CD4-positive, alpha-beta memory T cell (primary cell): ENCODE measurements at regions of chr3 and their contacts with region 1.

Region 1: GRCh38 chr3:194682694-194683310 is 2.9 kb upstream of the FAM43A start:
- DNase-seq: peak; percentile 59 to 74 (median 69)
- H3K4me3 ChIP-seq: no peak overlapping the region
- H3K4me3 Mint-ChIP-seq: peak overlapping the region in 1 of 8 donors; percentile 23
- H3K27ac ChIP-seq: no peak overlapping the region
- H3K27ac Mint-ChIP-seq: peak overlapping the region in 2 of 7 donors; percentile 4 to 62
- H3K4me1 ChIP-seq: peaks cover 35% of the 10 kb centered on the region
- H3K4me1 Mint-ChIP-seq: peaks cover 16 to 42% (median 29%) of the 10 kb centered on the region in 4 donors
- H3K27me3 ChIP-seq: no peaks in the 10 kb centered on the region
- H3K27me3 Mint-ChIP-seq: no peaks in the 10 kb centered on the region

Region 2: GRCh38 chr3:194583604-194584318 is 99.0 kb before region 1 on chr3:
- CTCF ChIA-PET with region 1: no interaction called
- POLR2A ChIA-PET with region 1: interaction called, 13 read pairs
- intact Hi-C with region 1: no loop called
- DNase-seq: peak; percentile 90 to 94 (median 94)
- H3K4me3 ChIP-seq: peak overlapping the region; percentile 71 to 76
- H3K4me3 Mint-ChIP-seq: peak overlapping the region; percentile 93 to 97 (median 94)
- H3K27ac ChIP-seq: peak overlapping the region; percentile 83
- H3K27ac Mint-ChIP-seq: peak overlapping the region; percentile 92 to 99 (median 97)
- H3K4me1 ChIP-seq: peaks cover 16% of the 10 kb centered on the region
- H3K4me1 Mint-ChIP-seq: peaks cover 7 to 21% (median 13%) of the 10 kb centered on the region in 4 donors
- H3K27me3 ChIP-seq: no peaks in the 10 kb centered on the region
- H3K27me3 Mint-ChIP-seq: no peaks in the 10 kb centered on the region

Region 3: DNA sequence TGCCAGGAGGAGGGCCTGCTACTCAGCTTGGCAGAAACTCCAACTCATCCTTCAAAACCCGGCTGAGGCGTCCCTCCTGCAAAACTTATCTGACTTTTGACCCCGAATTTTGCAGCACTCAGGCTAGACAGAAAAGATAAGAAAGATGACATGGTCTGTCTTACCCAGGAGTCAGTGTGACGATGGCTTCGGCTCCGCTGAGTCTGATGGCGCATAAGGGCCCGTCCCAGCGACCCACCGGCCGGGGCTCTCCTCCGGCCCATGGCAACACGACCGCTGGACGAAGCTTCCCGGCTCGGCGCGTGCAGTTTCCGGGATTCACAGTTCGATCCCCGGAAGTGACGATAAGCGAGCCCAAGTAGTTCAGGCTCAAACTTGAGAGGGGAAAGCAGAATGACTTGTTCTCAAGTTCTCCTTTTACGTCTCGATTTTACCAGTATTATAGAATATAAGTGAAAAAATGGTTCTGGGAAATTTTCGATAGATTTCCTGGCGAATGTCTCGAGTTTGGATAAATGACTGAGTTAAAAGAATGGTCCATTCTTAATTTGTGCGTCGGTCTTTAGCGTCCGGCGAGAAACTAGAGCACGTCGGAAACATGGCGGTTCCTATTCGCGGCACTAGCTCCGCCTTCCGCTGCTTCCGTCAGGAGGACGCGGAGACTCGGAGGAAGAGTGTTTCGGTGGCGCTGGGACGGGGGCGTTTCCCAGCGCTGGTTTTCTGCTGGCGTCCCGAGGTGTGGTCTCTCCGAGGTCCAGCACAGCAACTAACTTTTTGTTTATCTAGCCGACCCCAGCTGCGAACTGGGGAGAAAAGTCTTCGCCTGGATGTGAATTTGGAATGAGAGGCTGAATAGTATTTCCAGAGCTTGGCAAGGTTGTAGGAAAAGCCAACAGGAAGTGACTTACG is 10.6 kb before region 1 on chr3 and contains the start of gene LSG1:
- CTCF ChIA-PET with region 1: interaction called, 281 read pairs
- POLR2A ChIA-PET with region 1: interaction called, 262 read pairs
- intact Hi-C with region 1: loop called (anchors 1 kb)
- DNase-seq: peak; percentile 87 to 90 (median 89)
- H3K4me3 ChIP-seq: peak within 1 kb of the TSS; percentile 85 to 88
- H3K4me3 Mint-ChIP-seq: peak within 1 kb of the TSS; percentile 97 to 100 (median 99)
- H3K27ac ChIP-seq: peak within 1 kb of the TSS; percentile 95
- H3K27ac Mint-ChIP-seq: peak within 1 kb of the TSS; percentile 98 to 99 (median 99)
- H3K4me1 ChIP-seq: peaks cover 32% of the 10 kb centered on the region
- H3K4me1 Mint-ChIP-seq: peaks cover 26 to 52% (median 38%) of the 10 kb centered on the region in 4 donors
- H3K27me3 ChIP-seq: no peaks in the 10 kb centered on the region
- H3K27me3 Mint-ChIP-seq: peaks cover 0 to 4% of the 10 kb centered on the region in 2 donors
- total RNA-seq, gene LSG1: 48.4 to 49.5 TPM

Region 4: GRCh38 chr3:194696475-194697091 is 13.8 kb after region 1 on chr3:
- CTCF ChIA-PET with region 1: interaction called, 8 read pairs
- POLR2A ChIA-PET with region 1: interaction called, 14 read pairs
- intact Hi-C with region 1: no loop called
- DNase-seq: peak in 1 of 5 donors; percentile 12
- H3K4me3 ChIP-seq: no peak overlapping the region
- H3K4me3 Mint-ChIP-seq: peak overlapping the region in 1 of 8 donors; percentile 4
- H3K27ac ChIP-seq: no peak overlapping the region
- H3K27ac Mint-ChIP-seq: peak overlapping the region in 3 of 7 donors; percentile 25 to 54 (median 26)
- H3K4me1 ChIP-seq: no peaks in the 10 kb centered on the region
- H3K4me1 Mint-ChIP-seq: no peaks in the 10 kb centered on the region
- H3K27me3 ChIP-seq: no peaks in the 10 kb centered on the region
- H3K27me3 Mint-ChIP-seq: peaks cover 3 to 5% of the 10 kb centered on the region in 2 donors

Region 5: GRCh38 chr3:194769020-194769643 is 86.3 kb after region 1 on chr3:
- CTCF ChIA-PET with region 1: interaction called, 7 read pairs
- POLR2A ChIA-PET with region 1: interaction called, 27 read pairs
- intact Hi-C with region 1: loop called (anchors 1 kb)
- DNase-seq: peak; percentile 91 to 98 (median 94)
- H3K4me3 ChIP-seq: peak overlapping the region; percentile 33 to 54
- H3K4me3 Mint-ChIP-seq: peak overlapping the region; percentile 86 to 96 (median 87)
- H3K27ac ChIP-seq: peak overlapping the region; percentile 73
- H3K27ac Mint-ChIP-seq: peak overlapping the region; percentile 82 to 98 (median 95)
- H3K4me1 ChIP-seq: peaks cover 15% of the 10 kb centered on the region
- H3K4me1 Mint-ChIP-seq: peaks cover 5 to 30% (median 17%) of the 10 kb centered on the region in 4 donors
- H3K27me3 ChIP-seq: no peaks in the 10 kb centered on the region
- H3K27me3 Mint-ChIP-seq: peaks cover 8 to 11% of the 10 kb centered on the region in 2 donors

Region 6: GRCh38 chr3:195106418-195106906 is 423.7 kb after region 1 on chr3:
- CTCF ChIA-PET with region 1: interaction called, 151 read pairs
- POLR2A ChIA-PET with region 1: interaction called, 11 read pairs
- intact Hi-C with region 1: no loop called
- DNase-seq: peak; percentile 53 to 72 (median 61)
- H3K4me3 ChIP-seq: no peak overlapping the region
- H3K4me3 Mint-ChIP-seq: peak overlapping the region in 6 of 8 donors; percentile 3 to 73 (median 46)
- H3K27ac ChIP-seq: no peak overlapping the region
- H3K27ac Mint-ChIP-seq: peak overlapping the region in 2 of 7 donors; percentile 57 to 59
- H3K4me1 ChIP-seq: peaks cover 8% of the 10 kb centered on the region
- H3K4me1 Mint-ChIP-seq: peaks cover 0 to 6% (median 2%) of the 10 kb centered on the region in 4 donors
- H3K27me3 ChIP-seq: no peaks in the 10 kb centered on the region
- H3K27me3 Mint-ChIP-seq: no peaks in the 10 kb centered on the region

Region 7: DNA sequence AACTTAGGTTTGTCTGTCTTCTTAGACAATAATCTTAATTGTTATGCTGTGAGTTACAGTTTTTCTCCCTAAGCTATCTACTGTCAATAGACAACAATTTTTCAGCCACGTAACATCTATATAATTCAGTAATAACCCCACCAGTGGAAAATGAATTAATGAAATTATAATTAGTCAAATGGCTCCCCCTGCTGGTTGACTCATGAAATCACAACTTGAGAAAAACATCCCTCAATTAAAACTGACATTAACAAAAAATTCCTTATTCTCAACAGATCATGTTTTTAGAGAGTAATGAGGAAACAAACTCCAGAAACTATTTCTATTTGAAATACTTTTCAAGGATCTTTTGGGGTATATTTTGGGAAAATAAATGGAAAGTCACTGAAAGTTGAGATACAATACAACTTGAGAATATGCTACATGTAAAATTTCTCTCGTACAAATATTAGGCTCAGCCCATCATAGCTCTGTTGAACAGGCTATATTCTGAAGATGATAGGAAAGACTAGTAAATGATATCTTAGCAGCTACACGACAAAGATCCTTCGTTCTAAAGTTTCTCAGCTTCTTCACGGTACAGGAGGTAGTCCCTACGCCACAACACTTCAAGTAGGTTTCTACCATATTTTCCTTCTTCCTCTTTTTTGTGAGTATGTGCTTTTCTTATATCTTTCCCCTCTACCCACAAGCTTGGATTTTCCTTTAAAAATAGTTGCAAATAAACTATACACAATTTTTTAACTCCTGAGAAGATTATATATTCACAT is 839.6 kb after region 1 on chr3:
- CTCF ChIA-PET with region 1: interaction called, 9 read pairs
- POLR2A ChIA-PET with region 1: interaction called, 4 read pairs
- intact Hi-C with region 1: loop called (anchors 5 kb)
- DNase-seq: peak in 4 of 5 donors; percentile 46 to 56 (median 54)
- H3K4me3 ChIP-seq: no peak overlapping the region
- H3K4me3 Mint-ChIP-seq: peak overlapping the region in 1 of 8 donors; percentile 31
- H3K27ac ChIP-seq: no peak overlapping the region
- H3K27ac Mint-ChIP-seq: peak overlapping the region; percentile 38 to 82 (median 58)
- H3K4me1 ChIP-seq: peaks cover 50% of the 10 kb centered on the region
- H3K4me1 Mint-ChIP-seq: peaks cover 36 to 51% (median 42%) of the 10 kb centered on the region in 4 donors
- H3K27me3 ChIP-seq: no peaks in the 10 kb centered on the region
- H3K27me3 Mint-ChIP-seq: no peaks in the 10 kb centered on the region